Heart right ventricle (tissue), 16 donors: ENCODE measurements at regions of chr6 and their contacts with region 1.

Region 1: GRCh38 chr6:71510057-71510713 is 221.6 kb downstream of the OGFRL1 start:
- DNase-seq: peak; percentile 19 to 56
- ATAC-seq: peak in 7 of 8 donors; percentile 82 to 97 (median 89)
- H3K4me3 ChIP-seq: no peak overlapping the region
- H3K27ac ChIP-seq: peak overlapping the region in 1 of 10 donors; percentile 7
- H3K4me1 ChIP-seq: peaks cover 0 to 21% (median 0%) of the 10 kb centered on the region in 9 donors
- H3K27me3 ChIP-seq: no peaks in the 10 kb centered on the region
- CTCF ChIP-seq: peak; percentile 39 to 80 (median 66)

Region 2: GRCh38 chr6:71072508-71072907 is 437.7 kb before region 1 on chr6:
- intact Hi-C with region 1: loop called in 1 of 10 experiments (anchors 10 kb)
- DNase-seq: no peak
- ATAC-seq: peak in 6 of 8 donors; percentile 42 to 78 (median 64)
- H3K4me3 ChIP-seq: no peak overlapping the region
- H3K27ac ChIP-seq: no peak overlapping the region
- H3K4me1 ChIP-seq: peaks cover 0 to 16% (median 0%) of the 10 kb centered on the region in 9 donors
- H3K27me3 ChIP-seq: no peaks in the 10 kb centered on the region
- CTCF ChIP-seq: no peak

Region 3: DNA sequence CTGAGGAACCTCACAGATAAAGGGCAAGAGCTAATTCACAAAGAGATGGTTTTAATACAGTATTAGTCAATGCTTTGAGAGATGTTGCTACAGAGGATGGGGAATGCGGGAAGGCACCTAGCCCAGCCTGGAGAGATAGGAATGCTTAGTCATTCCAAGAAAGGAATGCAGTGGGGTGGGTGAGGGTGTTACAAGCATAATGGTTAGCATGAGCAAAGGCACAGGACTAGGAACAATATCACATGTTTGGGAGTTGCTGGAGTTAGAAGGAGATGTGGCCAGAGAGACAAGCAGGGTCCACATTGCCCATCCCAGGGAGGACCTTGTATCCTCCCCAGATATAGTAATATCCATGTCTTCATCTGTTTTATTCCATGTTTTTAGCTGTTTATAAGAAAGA is 328.6 kb before region 1 on chr6:
- intact Hi-C with region 1: loop called in 1 of 10 experiments (anchors 10 kb)
- DNase-seq: no peak
- ATAC-seq: peak in 2 of 8 donors; percentile 42 to 81
- H3K4me3 ChIP-seq: no peak overlapping the region
- H3K27ac ChIP-seq: no peak overlapping the region
- H3K4me1 ChIP-seq: peaks cover 0 to 10% (median 0%) of the 10 kb centered on the region in 9 donors
- H3K27me3 ChIP-seq: no peaks in the 10 kb centered on the region
- CTCF ChIP-seq: no peak

Region 4: GRCh38 chr6:71190809-71191208 is 319.4 kb before region 1 on chr6:
- intact Hi-C with region 1: loop called in 5 of 10 experiments (anchors 5 to 10 kb)
- DNase-seq: no peak
- ATAC-seq: no peak
- H3K4me3 ChIP-seq: no peak overlapping the region
- H3K27ac ChIP-seq: no peak overlapping the region
- H3K4me1 ChIP-seq: no peaks in the 10 kb centered on the region
- H3K27me3 ChIP-seq: no peaks in the 10 kb centered on the region
- CTCF ChIP-seq: peak; percentile 6 to 61 (median 43)

Region 5: DNA sequence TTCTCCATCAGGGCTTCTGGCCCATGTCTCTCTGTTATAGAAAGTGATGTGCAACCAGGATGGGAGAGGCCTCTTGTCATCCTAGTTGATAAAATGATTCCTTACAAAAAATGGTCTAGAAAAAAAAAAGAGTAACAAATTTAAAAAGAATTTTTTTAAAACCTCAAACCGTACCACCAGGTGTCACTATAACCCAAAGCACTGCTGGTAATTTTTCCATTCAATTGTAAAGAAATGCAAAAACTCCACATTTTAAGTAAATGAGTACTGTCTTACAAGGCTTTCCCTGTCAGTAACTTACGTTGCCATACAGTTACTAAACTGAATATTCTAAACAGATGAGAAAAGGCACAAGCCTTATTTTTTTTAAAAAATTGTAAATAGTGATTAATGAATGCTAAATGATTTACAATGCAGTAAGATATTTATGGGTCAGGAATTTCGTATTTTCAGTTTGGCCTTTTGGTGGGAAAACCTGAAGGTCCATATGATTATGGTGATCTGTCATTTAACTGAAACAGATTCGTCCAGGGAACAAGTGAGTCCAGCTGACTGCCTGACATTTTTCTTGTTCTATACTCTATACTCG is 126.2 kb before region 1 on chr6:
- intact Hi-C with region 1: loop called in 9 of 10 experiments (anchors 1 to 10 kb)
- DNase-seq: peak in 1 of 2 donors; percentile 38
- ATAC-seq: peak in 1 of 8 donors; percentile 26
- H3K4me3 ChIP-seq: no peak overlapping the region
- H3K27ac ChIP-seq: peak overlapping the region in 1 of 10 donors; percentile 16
- H3K4me1 ChIP-seq: peaks cover 6 to 63% (median 31%) of the 10 kb centered on the region in 9 donors
- H3K27me3 ChIP-seq: no peaks in the 10 kb centered on the region
- CTCF ChIP-seq: peak; percentile 54 to 82 (median 72)

Region 6: DNA sequence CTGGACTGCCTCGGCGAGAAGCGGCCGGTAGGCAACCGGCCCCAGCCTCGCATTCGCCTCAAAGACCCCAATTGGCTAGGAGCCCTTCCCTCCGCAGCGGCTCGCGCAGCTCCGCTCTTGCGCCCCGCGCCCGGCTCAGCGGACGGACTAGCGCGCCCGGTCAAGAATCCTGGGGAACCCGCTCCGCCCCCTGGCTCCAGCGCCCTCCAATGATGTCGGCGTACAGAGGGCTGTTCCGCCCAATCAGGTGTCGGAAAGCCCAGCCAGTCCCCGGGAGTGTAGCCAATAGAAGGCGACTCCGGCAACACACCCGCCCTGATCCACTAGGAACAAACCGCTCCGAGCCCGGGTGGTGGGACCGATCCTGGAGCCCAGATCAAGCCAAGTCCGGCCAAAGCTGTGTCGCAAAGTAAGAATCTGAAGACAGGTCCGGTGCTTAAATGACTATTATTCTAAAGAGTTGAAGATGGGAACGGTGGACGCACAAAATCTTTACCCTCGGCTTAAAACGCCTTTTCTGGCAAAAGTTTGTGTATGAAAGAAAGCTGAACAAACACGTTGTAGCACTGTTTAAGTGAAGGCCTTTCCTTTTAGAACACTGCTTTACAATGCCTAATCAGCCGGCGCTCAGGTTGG is 89.4 kb before region 1 on chr6:
- intact Hi-C with region 1: loop called in 1 of 10 experiments (anchors 5 kb)
- DNase-seq: peak; percentile 95 to 98
- ATAC-seq: peak; percentile 98 to 99 (median 99)
- H3K4me3 ChIP-seq: peak overlapping the region; percentile 60 to 93 (median 89)
- H3K27ac ChIP-seq: peak overlapping the region; percentile 90 to 98 (median 96)
- H3K4me1 ChIP-seq: peaks cover 0 to 39% (median 22%) of the 10 kb centered on the region in 9 donors
- H3K27me3 ChIP-seq: peaks cover 0 to 46% (median 0%) of the 10 kb centered on the region in 7 donors
- CTCF ChIP-seq: peak in 2 of 9 donors; percentile 18 to 20